ENCODE measurements at regions of chr9 and their contacts with region 1.

Region 1: DNA sequence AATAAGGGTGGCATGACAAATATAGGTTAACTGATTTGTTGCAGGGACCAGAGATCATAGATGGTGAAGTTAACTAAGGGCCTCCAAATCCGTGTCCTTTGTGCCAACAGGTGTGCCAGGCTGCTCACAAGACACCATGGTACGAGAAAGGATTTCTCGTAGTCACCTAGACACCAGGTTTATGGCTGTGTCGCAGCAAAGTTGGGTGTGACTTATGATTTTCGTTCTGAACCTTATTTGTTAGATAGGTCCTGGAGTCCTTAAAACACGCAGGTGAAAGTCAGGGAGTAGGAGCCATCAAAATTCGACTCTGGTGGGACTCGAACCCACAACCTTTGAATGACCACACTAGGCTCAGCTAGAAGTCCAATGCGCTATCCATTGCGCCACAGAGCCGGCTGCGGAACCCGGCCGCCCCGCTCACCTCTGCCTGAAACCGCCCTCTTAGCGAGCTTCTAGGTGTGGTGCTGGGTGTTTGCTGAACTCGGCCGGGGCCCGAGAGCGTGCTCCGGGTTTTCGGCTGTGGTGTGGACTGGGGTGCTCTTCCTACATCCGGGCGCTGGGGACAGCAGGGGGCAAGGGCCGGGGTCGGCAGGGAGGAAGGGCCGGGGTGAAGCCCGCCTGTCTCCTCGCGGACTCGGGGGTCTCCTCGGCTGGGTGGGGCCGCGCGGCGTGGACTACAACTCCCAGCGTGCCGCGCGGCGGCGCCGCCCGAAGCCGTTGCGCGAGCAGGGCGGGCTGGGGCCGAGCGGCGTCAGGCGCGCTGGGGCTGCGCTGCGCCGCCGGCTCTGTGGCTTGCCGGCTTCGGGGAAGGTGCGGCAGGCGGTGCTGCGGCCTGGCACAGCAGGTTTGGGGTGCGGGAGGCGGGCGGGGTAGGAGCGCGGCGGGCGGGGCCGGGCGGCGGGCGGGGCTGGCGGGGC is at the start of gene SLC27A4:
- DNase-seq: peak; percentile 88
- ATAC-seq: peak; percentile 93
- H3K4me3 Mint-ChIP-seq: peak within 1 kb of the TSS; percentile 88
- H3K27ac Mint-ChIP-seq: peak within 1 kb of the TSS; percentile 83
- H3K4me1 Mint-ChIP-seq: peaks cover 6% of the 10 kb centered on the region
- H3K27me3 Mint-ChIP-seq: no peaks in the 10 kb centered on the region
- total RNA-seq, gene SLC27A4: 8.4 to 10.2 TPM

Region 2: DNA sequence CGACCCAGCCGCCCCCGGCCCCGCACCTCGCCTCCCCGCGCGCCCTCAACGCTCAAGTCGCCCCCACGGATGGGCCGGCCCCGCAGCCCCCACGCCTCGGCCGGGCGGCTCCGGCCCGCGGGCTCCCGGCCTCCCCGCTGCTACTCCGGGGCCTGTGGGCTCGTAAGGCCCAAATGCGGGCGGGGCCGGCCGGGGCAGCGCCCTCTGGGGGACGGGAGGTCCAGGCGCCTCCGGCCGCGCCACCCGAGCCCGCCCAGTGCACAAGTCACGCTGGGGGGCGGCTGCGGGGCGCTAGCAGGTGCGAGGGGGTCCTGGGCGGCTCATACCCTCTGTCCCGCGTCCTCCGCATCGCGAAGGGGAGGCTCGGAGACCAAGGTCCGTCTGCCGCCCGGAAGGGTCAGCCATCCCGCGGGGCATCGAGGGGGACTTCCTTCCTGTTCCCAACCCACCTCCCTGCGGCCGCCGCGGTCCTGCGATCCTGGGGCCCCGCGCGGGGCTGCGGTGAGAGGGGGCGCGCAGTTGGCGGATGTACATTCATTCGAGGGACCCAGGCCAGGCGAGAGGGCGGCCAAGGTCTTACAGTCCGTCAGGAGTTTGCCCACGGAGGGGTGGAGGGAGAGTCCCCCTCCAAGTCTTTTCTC is 148.5 kb before region 1 on chr9 and contains the start of gene CIZ1:
- CTCF ChIA-PET with region 1: interaction called, 3 read pairs
- POLR2A ChIA-PET with region 1: no interaction called
- intact Hi-C with region 1: loop called in 1 of 2 experiments (anchors 1 kb)
- DNase-seq: peak; percentile 84
- ATAC-seq: peak; percentile 82
- H3K4me3 Mint-ChIP-seq: peak within 1 kb of the TSS; percentile 87
- H3K27ac Mint-ChIP-seq: peak within 1 kb of the TSS; percentile 85
- H3K4me1 Mint-ChIP-seq: peaks cover 28% of the 10 kb centered on the region
- H3K27me3 Mint-ChIP-seq: no peaks in the 10 kb centered on the region
- total RNA-seq, gene CIZ1: 79.5 to 110 TPM

Region 3: GRCh38 chr9:128203024-128203706 is 136.9 kb before region 1 on chr9 and contains the start of gene DNM1:
- CTCF ChIA-PET with region 1: no interaction called
- POLR2A ChIA-PET with region 1: no interaction called
- intact Hi-C with region 1: loop called in 1 of 2 experiments (anchors 1 kb)
- DNase-seq: peak; percentile 83
- ATAC-seq: peak; percentile 95
- H3K4me3 Mint-ChIP-seq: peak within 1 kb of the TSS; percentile 39
- H3K27ac Mint-ChIP-seq: peak within 1 kb of the TSS; percentile 66
- H3K4me1 Mint-ChIP-seq: peaks cover 12% of the 10 kb centered on the region
- H3K27me3 Mint-ChIP-seq: peaks cover 11% of the 10 kb centered on the region
- total RNA-seq, gene DNM1: 0.50 to 0.72 TPM

Region 4: DNA sequence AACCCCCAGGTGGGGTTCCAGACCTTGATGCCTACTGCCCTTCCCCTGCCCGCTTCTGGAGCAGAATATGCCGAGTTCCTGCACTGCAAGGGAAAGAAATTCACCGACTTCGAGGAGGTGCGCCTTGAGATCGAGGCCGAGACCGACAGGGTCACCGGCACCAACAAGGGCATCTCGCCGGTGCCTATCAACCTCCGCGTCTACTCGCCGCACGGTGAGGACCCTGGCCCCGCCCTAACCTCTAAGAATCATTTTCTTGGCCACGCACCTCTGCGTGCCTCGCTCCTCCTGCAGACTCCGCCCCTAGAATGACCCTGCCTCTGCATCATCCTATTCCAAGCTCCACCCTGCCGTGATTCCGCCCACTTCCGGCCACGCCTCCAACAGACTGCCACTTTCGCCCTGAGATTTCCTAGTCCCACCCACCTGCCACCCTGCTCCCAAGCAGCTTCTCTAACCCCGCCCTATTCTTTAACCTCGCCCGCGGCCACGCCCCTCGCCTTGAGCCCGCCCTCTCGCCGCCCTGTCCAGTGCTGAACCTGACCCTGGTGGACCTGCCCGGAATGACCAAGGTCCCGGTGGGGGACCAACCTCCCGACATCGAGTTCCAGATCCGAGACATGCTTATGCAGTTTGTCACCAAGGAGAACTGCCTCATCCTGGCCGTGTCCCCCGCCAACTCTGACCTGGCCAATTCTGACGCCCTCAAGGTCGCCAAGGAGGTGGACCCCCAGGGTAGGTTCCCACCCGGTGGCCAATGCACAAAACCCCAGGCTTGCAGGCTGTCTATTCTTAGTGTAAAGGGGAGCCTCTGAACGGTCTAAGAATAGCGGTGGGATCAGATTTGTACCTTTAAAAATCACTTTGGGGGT is 121.3 kb before region 1 on chr9:
- CTCF ChIA-PET with region 1: no interaction called
- POLR2A ChIA-PET with region 1: no interaction called
- intact Hi-C with region 1: loop called in 1 of 2 experiments (anchors 1 kb)
- DNase-seq: peak; percentile 97
- ATAC-seq: peak; percentile 98
- H3K4me3 Mint-ChIP-seq: peak overlapping the region; percentile 71
- H3K27ac Mint-ChIP-seq: peak overlapping the region; percentile 74
- H3K4me1 Mint-ChIP-seq: peaks cover 11% of the 10 kb centered on the region
- H3K27me3 Mint-ChIP-seq: no peaks in the 10 kb centered on the region

Region 5: DNA sequence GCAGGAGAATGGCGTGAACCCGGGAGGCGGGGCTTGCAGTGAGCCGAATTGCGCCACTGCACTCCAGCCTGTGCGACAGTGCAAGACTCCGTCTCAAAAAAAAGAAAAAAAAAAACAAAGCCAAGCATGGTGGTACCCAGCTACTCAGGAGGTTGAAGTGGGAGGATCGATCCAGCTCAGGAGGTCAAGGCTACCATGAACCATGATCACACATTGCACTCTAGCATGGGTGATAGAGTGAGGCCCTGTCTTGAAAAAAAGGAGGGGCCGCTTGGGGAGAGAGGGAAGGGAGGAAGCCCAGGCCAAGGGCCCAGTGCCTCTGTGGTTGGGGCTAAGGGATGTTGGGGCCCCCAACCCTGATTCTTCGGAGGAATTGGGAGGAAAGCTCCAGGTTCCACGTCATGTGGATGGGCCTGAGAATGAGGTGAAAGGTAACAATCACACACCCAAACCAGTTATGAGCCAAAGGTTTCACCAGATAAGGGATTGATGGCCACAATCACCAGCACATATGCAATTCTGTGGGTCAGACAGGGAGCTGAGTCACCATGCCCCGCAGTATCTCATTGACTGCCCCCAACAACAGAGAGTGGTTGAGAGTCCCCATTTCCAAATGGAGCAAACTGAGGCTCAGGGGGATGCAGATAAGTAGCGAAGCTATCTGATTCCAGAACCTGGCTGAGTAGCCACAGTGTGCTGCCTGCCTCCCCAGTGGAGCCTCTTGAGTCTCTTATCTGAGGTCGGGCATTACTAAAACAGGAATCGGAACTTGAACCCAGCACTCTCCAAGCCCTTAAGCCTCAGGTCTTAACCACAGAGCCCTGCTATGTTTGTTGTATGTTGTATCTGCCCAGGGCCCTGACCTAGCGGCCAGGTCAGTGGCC is 43.5 kb before region 1 on chr9:
- CTCF ChIA-PET with region 1: interaction called, 10 read pairs
- POLR2A ChIA-PET with region 1: interaction called, 3 read pairs
- intact Hi-C with region 1: loop called (anchors 1 to 5 kb)
- DNase-seq: no peak
- ATAC-seq: no peak
- H3K4me3 Mint-ChIP-seq: no peak overlapping the region
- H3K27ac Mint-ChIP-seq: no peak overlapping the region
- H3K4me1 Mint-ChIP-seq: no peaks in the 10 kb centered on the region
- H3K27me3 Mint-ChIP-seq: no peaks in the 10 kb centered on the region

Region 6: DNA sequence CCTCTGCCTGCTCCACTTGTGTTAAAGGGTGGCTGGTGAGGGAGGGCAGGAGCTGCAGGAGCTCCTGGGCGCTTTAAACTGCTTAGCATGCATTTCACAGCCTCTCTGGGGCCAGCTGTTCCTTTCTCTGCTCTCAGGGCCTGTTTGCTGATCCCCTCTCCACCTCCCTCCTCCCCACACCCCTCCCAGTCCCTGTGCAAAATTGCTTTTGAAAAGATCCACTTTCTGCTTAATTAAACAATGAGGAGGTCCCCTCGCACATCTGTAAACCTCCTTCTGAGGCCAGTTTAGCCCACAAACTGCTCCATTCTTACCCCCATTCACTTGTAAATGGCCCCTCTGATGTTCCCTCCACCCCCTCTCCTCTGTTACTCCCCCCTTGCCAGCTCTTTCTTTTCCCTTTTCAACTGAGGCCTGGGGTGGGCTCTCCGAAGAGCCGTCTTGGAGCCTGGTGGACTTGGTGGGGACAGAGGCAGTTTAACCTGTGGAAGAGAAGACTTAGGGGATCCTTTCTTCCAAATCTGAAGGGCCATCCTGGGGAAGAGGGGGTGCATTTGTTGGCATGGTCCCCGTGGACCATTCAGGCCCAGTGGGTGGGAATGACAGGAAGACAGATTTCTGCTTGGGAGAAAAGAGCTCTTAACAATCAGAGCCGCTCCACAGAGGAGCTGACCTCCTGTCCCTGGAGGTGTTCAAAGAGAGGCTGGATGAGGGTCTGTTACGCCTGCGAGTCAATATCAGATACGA is 43.1 kb after region 1 on chr9:
- CTCF ChIA-PET with region 1: no interaction called
- POLR2A ChIA-PET with region 1: no interaction called
- intact Hi-C with region 1: no loop called
- DNase-seq: no peak
- ATAC-seq: no peak
- H3K4me3 Mint-ChIP-seq: no peak overlapping the region
- H3K27ac Mint-ChIP-seq: no peak overlapping the region
- H3K4me1 Mint-ChIP-seq: no peaks in the 10 kb centered on the region
- H3K27me3 Mint-ChIP-seq: no peaks in the 10 kb centered on the region

Region 7: GRCh38 chr9:129036241-129036922 is 696.4 kb after region 1 on chr9 and contains the start of gene MIGA2:
- CTCF ChIA-PET with region 1: no interaction called
- POLR2A ChIA-PET with region 1: no interaction called
- intact Hi-C with region 1: loop called in 1 of 2 experiments (anchors 1 kb)
- DNase-seq: peak; percentile 96
- ATAC-seq: peak; percentile 99
- H3K4me3 Mint-ChIP-seq: peak within 1 kb of the TSS; percentile 98
- H3K27ac Mint-ChIP-seq: peak within 1 kb of the TSS; percentile 83
- H3K4me1 Mint-ChIP-seq: peaks cover 27% of the 10 kb centered on the region
- H3K27me3 Mint-ChIP-seq: no peaks in the 10 kb centered on the region
- total RNA-seq, gene MIGA2: 15.7 to 25.8 TPM

Measured in activated CD4-positive, alpha-beta T cell treated with anti-CD3 and anti-CD28 coated beads for 36 hours (primary cell).